Activated CD4-positive, alpha-beta T cell treated with anti-CD3 and anti-CD28 coated beads for 36 hours (primary cell): ENCODE measurements at regions of chr9 and their contacts with region 1.

Region 1: GRCh38 chr9:112945620-112946208 is 55.0 kb upstream of the SLC46A2 start:
- DNase-seq: peak; percentile 41
- ATAC-seq: peak; percentile 26
- H3K4me3 Mint-ChIP-seq: no peak overlapping the region
- H3K27ac Mint-ChIP-seq: no peak overlapping the region
- H3K4me1 Mint-ChIP-seq: no peaks in the 10 kb centered on the region
- H3K27me3 Mint-ChIP-seq: peaks cover 11% of the 10 kb centered on the region

Region 2: GRCh38 chr9:112574008-112574407 is 371.7 kb before region 1 on chr9:
- CTCF ChIA-PET with region 1: no interaction called
- POLR2A ChIA-PET with region 1: interaction called, 11 read pairs
- intact Hi-C with region 1: no loop called
- DNase-seq: no peak
- ATAC-seq: no peak
- H3K4me3 Mint-ChIP-seq: no peak overlapping the region
- H3K27ac Mint-ChIP-seq: no peak overlapping the region
- H3K4me1 Mint-ChIP-seq: peaks cover 2% of the 10 kb centered on the region
- H3K27me3 Mint-ChIP-seq: no peaks in the 10 kb centered on the region

Region 3: GRCh38 chr9:113056191-113057106 is 110.7 kb after region 1 on chr9 and contains the start of gene ZFP37:
- CTCF ChIA-PET with region 1: no interaction called
- POLR2A ChIA-PET with region 1: no interaction called
- intact Hi-C with region 1: no loop called
- DNase-seq: peak; percentile 83
- ATAC-seq: peak; percentile 97
- H3K4me3 Mint-ChIP-seq: no peak within 1 kb of the TSS
- H3K27ac Mint-ChIP-seq: no peak within 1 kb of the TSS
- H3K4me1 Mint-ChIP-seq: no peaks in the 10 kb centered on the region
- H3K27me3 Mint-ChIP-seq: peaks cover 11% of the 10 kb centered on the region
- total RNA-seq, gene ZFP37: 1.0 to 1.5 TPM

Region 4: GRCh38 chr9:114559830-114560513 is 1614.3 kb after region 1 on chr9:
- CTCF ChIA-PET with region 1: no interaction called
- POLR2A ChIA-PET with region 1: no interaction called
- intact Hi-C with region 1: no loop called
- DNase-seq: no peak
- ATAC-seq: no peak
- H3K4me3 Mint-ChIP-seq: no peak overlapping the region
- H3K27ac Mint-ChIP-seq: no peak overlapping the region
- H3K4me1 Mint-ChIP-seq: no peaks in the 10 kb centered on the region
- H3K27me3 Mint-ChIP-seq: peaks cover 7% of the 10 kb centered on the region